Right ventricle myocardium inferior (tissue), 1 donor: ENCODE measurements at regions of chr7 and their contacts with region 1.

Region 1: GRCh38 chr7:41977151-41977651 is 259.8 kb downstream of the GLI3 start:
- DNase-seq: no peak
- ATAC-seq: peak; percentile 48

Region 2: DNA sequence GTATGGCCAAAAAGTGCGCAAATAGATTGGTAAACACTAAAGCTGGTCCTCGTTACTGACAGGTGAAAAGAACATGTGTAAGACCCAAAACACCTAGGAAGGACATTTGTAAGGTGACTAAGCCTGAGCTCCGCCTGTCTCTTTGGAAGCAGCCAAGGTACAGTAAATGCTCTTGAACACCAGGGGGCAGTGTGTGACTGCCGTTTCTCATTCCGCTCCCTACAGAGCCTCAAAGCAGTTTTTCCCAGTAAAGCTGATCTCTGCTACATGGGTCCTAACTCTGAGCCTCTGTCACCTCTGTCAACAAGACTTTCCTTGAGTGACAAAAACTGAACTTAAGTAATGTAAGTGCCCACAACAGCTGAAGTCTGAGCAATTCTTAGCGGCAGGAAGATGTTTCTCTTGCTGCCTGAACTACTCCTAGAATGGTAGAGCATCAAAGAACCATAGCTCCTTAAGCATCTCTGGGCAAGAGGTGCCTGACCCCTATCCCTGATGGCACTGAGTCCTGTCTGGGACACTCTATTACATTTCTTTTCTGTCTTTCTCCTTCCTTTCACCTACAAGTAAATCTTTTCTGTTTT is 36.3 kb before region 1 on chr7:
- intact Hi-C with region 1: loop called (anchors 5 kb)
- DNase-seq: no peak
- ATAC-seq: peak; percentile 82

Region 3: GRCh38 chr7:42237162-42237821 is 260.1 kb after region 1 on chr7 and contains the start of gene GLI3:
- intact Hi-C with region 1: loop called (anchors 10 kb)
- DNase-seq: peak; percentile 89
- ATAC-seq: peak; percentile 92
- total RNA-seq, gene GLI3: 3.9 TPM

Region 4: DNA sequence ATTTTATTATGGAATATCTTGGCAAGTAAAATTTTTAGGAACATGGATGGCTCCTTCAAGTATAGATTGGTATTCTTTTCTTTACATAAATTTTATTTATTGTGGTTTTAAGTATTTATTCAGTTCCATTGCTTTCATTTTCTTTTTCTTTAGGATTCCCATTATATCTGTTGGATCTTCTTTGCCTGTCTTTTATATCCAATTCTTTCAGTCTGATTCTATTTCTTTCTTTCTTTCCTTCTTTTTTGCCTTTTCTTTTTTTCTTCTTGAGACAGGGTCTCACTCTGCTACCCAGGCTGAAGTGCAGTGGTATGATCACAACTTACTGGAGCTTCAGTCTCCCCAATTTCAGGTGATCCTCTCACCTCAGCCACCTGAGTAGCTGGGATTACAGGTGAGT is 334.0 kb after region 1 on chr7:
- intact Hi-C with region 1: loop called (anchors 10 kb)
- DNase-seq: no peak
- ATAC-seq: no peak

Region 5: GRCh38 chr7:42690794-42691639 is 713.8 kb after region 1 on chr7:
- intact Hi-C with region 1: loop called (anchors 10 kb)
- DNase-seq: no peak
- ATAC-seq: peak; percentile 45

Region 6: GRCh38 chr7:42843205-42843800 is 866.1 kb after region 1 on chr7:
- intact Hi-C with region 1: loop called (anchors 10 kb)
- DNase-seq: no peak
- ATAC-seq: peak; percentile 75